ENCODE measurements at regions of chr10 and their contacts with region 1.

Region 1: DNA sequence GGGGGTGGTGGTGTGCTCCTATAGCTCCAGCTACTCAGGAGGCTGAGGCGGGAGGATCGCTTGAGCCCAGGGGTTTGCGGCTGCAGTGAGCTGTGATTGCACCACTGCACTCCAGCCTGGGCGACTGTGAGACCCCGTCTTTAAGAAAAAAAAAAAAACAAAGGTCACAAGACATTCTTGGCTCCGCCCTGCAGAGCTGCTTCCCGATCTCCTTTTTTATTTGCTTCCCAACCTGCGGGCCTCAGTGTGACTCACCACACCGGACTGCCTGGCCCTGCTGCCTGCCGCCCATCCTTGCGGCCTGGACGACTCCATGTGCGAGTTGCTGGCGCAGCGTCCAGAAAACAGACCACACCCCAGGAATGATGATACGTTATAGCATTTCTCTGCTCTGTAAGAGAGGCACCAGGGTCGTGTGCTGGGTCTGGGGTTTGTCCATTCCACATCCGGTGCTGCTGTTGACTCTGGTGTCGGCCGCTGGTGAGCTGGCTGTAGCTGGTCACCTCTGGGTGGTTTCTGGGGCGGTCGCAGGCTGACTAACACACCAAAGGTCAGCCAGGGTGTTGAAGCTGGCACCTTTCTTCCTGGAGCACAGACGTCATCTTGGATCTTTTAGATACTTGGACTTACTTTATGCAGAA is 123.6 kb downstream of the TCF7L2 start:
- DNase-seq: peak; percentile 83
- H3K4me3 ChIP-seq: no peak overlapping the region
- H3K27ac ChIP-seq: peak overlapping the region; percentile 78
- H3K27me3 ChIP-seq: no peaks in the 10 kb centered on the region
- CTCF ChIP-seq: no peak

Region 2: GRCh38 chr10:112926906-112927688 is 146.6 kb before region 1 on chr10:
- CTCF ChIA-PET with region 1: no interaction called
- POLR2A ChIA-PET with region 1: no interaction called
- DNase-seq: no peak
- H3K4me3 ChIP-seq: no peak overlapping the region
- H3K27ac ChIP-seq: no peak overlapping the region
- H3K27me3 ChIP-seq: no peaks in the 10 kb centered on the region
- CTCF ChIP-seq: no peak

Region 3: GRCh38 chr10:113049881-113050280 is 23.8 kb before region 1 on chr10:
- CTCF ChIA-PET with region 1: no interaction called
- POLR2A ChIA-PET with region 1: no interaction called
- DNase-seq: no peak
- H3K4me3 ChIP-seq: no peak overlapping the region
- H3K27ac ChIP-seq: no peak overlapping the region
- H3K27me3 ChIP-seq: no peaks in the 10 kb centered on the region
- CTCF ChIP-seq: no peak

Region 4: DNA sequence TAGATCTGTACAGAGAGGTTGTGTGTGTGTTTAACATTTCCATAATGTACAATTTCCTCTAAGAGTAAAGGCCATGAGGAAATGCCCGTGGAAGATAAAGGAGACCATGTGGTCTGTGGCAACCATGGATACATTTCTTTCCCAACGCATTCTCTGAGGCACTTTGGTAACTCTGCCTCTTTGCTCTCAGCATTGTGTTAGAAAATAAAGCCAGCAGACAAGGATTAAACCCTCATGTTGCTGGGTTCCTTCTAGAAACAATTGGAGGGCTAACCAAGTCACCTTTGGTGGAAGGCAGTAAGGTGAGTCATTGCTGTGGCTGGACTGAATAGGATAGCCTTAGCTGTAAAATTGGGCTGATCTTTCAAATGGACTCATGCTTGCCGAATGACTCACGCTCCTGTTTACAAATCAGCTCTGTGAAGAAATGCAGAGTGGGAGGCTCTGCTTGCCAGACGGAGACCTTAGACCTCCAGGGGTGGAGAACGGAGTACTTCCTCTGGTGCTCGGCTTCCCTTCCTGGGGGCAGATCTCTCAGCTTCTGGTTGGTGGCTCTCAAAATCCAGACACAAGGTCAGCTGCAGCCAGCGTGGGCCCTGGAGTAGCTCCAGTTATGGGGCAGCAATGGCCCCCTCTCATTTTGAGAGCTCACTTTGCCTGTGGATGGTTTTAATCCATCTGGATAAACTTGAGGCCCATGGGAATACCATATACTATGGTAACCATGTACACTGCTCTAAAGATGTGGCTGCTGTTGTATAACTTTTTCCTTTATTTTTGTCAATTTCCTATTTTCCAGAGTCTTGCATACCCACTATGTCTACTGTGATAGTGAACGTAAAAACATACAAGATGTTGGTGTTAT is 13.7 kb after region 1 on chr10:
- CTCF ChIA-PET with region 1: interaction called, 3 read pairs
- POLR2A ChIA-PET with region 1: interaction called, 11 read pairs
- DNase-seq: peak; percentile 98
- H3K4me3 ChIP-seq: no peak overlapping the region
- H3K27ac ChIP-seq: peak overlapping the region; percentile 78
- H3K27me3 ChIP-seq: no peaks in the 10 kb centered on the region
- CTCF ChIP-seq: no peak

Region 5: DNA sequence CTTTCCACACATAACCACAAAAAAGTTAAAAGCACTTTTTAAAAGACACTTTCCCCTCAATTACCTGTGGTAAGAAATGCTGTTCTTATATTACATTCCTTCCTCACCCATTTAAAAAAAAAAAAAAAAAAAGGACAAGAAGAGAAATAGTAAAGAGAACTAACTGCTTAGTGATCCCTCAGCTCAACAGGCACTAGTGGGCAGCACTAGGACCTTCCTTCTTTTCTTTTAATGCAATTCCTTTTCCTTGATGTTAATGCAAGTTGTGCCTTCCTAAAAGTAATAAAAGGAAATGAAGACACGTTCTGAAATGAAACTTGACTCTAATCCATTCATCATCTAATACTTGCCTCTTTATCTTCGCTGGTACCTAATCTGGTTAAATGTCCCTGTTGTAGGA is 66.0 kb after region 1 on chr10:
- CTCF ChIA-PET with region 1: no interaction called
- POLR2A ChIA-PET with region 1: no interaction called
- DNase-seq: no peak
- H3K4me3 ChIP-seq: no peak overlapping the region
- H3K27ac ChIP-seq: no peak overlapping the region
- H3K27me3 ChIP-seq: no peaks in the 10 kb centered on the region
- CTCF ChIP-seq: peak; percentile 38